K562 (cell line): ENCODE measurements at regions of chr2 and their contacts with region 1.

Region 1: DNA sequence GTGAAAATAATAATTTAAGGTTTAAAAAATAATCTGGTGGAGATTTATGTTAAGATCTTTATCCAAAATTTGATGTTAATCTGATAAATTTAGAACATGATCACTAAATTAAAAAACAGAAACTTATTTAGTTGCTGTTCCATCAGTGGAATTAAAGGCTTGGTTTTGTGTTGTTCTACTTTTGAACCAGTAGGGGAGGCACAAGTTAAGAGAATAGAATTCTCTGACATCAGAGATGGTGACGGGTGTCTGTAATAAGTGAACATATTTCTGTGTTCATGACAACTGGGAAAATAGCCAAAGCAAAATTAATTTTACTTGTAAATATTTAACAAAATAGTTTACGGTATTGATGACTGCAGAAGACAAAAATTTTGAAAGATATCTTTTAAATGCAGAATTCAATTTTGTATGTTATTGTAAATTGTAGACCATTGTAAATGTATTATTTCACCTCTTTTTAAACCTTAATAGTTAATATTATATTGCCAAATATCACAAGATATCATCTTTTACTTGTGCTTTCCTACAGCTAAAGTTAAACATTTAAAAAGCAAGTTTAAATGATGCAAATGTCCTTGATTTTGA is 106.0 kb downstream of the UBR3 start:
- DNase-seq: peak; percentile 52 to 66 (median 65)
- ATAC-seq: peak; percentile 90
- H3K4me3 ChIP-seq: no peak overlapping the region
- H3K27ac ChIP-seq: no peak overlapping the region
- H3K4me1 ChIP-seq: no peaks in the 10 kb centered on the region
- H3K27me3 ChIP-seq: no peaks in the 10 kb centered on the region
- CTCF ChIP-seq: peak; percentile 64 to 95 (median 75); a peak in 5 of 6 replicates
- EP300 ChIP-seq: no peak
- POLR2A ChIP-seq: no peak
- RAD21 ChIP-seq: peak; percentile 94 to 95

Region 2: GRCh38 chr2:169528271-169528701 is 404.9 kb before region 1 on chr2:
- CTCF ChIA-PET with region 1: interaction called, 16 read pairs
- POLR2A ChIA-PET with region 1: no interaction called
- in situ Hi-C with region 1: no loop called
- intact Hi-C with region 1: loop called (anchors 2 kb)
- DNase-seq: peak; percentile 71 to 88 (median 81)
- ATAC-seq: peak; percentile 99
- H3K4me3 ChIP-seq: no peak overlapping the region
- H3K27ac ChIP-seq: no peak overlapping the region
- H3K4me1 ChIP-seq: no peaks in the 10 kb centered on the region
- H3K27me3 ChIP-seq: no peaks in the 10 kb centered on the region
- CTCF ChIP-seq: peak; percentile 88 to 94 (median 91)
- EP300 ChIP-seq: no peak
- POLR2A ChIP-seq: no peak
- RAD21 ChIP-seq: peak; percentile 74 to 92

Region 3: DNA sequence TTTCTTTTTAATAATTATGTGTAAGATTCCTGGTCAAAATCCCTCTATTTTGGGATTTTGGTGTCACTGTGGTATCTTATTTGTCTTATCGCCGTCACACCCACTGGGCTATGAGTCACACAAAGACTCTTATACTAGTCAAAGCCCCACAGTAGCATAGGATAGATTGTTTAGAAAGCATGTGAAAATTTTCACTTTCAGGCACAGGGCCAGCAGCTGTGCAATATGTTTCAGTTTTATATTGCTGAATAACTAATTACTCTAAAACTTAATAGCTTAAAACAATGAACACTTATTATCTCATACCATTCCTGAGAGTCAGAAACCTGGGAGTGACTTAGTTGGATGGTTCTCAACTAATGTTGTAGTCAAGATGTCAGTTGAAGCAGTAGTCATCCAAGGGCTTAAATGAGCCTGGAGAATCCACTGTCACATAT is 263.0 kb before region 1 on chr2:
- CTCF ChIA-PET with region 1: no interaction called
- POLR2A ChIA-PET with region 1: no interaction called
- in situ Hi-C with region 1: no loop called
- intact Hi-C with region 1: loop called (anchors 10 kb)
- DNase-seq: peak; percentile 66 to 84 (median 76)
- ATAC-seq: peak; percentile 86
- H3K4me3 ChIP-seq: no peak overlapping the region
- H3K27ac ChIP-seq: peak overlapping the region; percentile 65
- H3K4me1 ChIP-seq: peaks cover 0 to 49% of the 10 kb centered on the region in 2 experiments; a peak in 3 of 5 replicates
- H3K27me3 ChIP-seq: no peaks in the 10 kb centered on the region
- CTCF ChIP-seq: no peak
- EP300 ChIP-seq: peak; percentile 82; the same call in 1 of the 2 replicates
- POLR2A ChIP-seq: no peak
- RAD21 ChIP-seq: no peak

Region 4: DNA sequence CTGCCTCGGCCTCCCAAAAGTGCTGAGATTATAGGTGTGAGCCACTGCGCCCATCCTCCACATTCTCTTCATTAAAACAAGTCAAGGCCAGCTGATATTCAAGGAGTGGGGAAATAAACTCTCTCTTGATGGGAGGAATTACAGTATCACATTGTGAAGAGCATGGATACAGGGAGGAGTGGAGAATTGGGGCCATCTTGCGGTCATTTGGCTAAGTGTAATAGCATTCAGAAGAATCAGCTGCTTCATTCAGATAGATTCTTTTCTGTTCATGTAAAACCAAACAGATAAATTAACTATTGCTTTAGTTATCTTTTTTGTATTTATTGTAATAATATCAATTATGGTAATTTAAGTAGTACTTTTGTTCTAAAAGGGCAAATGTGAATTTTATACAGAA is 50.3 kb after region 1 on chr2:
- CTCF ChIA-PET with region 1: interaction called, 9 read pairs
- POLR2A ChIA-PET with region 1: no interaction called
- in situ Hi-C with region 1: no loop called
- intact Hi-C with region 1: loop called (anchors 1 kb)
- DNase-seq: peak in 2 of 4 experiments; percentile 26 to 41
- ATAC-seq: peak; percentile 83
- H3K4me3 ChIP-seq: no peak overlapping the region
- H3K27ac ChIP-seq: no peak overlapping the region
- H3K4me1 ChIP-seq: peaks cover 4 to 11% of the 10 kb centered on the region in 2 experiments; a peak in 3 of 5 replicates
- H3K27me3 ChIP-seq: no peaks in the 10 kb centered on the region
- CTCF ChIP-seq: peak; percentile 45 to 61 (median 47); a peak in 4 of 6 replicates
- EP300 ChIP-seq: no peak
- POLR2A ChIP-seq: no peak
- RAD21 ChIP-seq: peak; percentile 49 to 76

Region 5: GRCh38 chr2:170235860-170236679 is 302.9 kb after region 1 on chr2:
- CTCF ChIA-PET with region 1: no interaction called
- POLR2A ChIA-PET with region 1: no interaction called
- in situ Hi-C with region 1: no loop called
- intact Hi-C with region 1: loop called (anchors 2 kb)
- DNase-seq: peak; percentile 83 to 89 (median 84)
- ATAC-seq: peak; percentile 89
- H3K4me3 ChIP-seq: no peak overlapping the region
- H3K27ac ChIP-seq: no peak overlapping the region; the same call in 1 of the 3 replicates
- H3K4me1 ChIP-seq: peaks cover 0 to 57% of the 10 kb centered on the region in 2 experiments; a peak in 3 of 5 replicates
- H3K27me3 ChIP-seq: no peaks in the 10 kb centered on the region
- CTCF ChIP-seq: peak; percentile 69 to 92 (median 86)
- EP300 ChIP-seq: peak; percentile 94
- POLR2A ChIP-seq: no peak
- RAD21 ChIP-seq: peak; percentile 99

Region 6: GRCh38 chr2:170361090-170361936 is 428.1 kb after region 1 on chr2:
- CTCF ChIA-PET with region 1: no interaction called
- POLR2A ChIA-PET with region 1: no interaction called
- in situ Hi-C with region 1: no loop called
- intact Hi-C with region 1: loop called (anchors 5 kb)
- DNase-seq: peak; percentile 57 to 90 (median 64)
- ATAC-seq: peak; percentile 85
- H3K4me3 ChIP-seq: 0 out of 2 replicates have a peak overlapping the region, but pooled peaks have one; percentile 0
- H3K27ac ChIP-seq: peak overlapping the region; percentile 75
- H3K4me1 ChIP-seq: peaks cover 0 to 56% of the 10 kb centered on the region in 2 experiments; a peak in 4 of 5 replicates
- H3K27me3 ChIP-seq: no peaks in the 10 kb centered on the region
- CTCF ChIP-seq: peak; percentile 81 to 95 (median 89)
- EP300 ChIP-seq: no peak
- POLR2A ChIP-seq: no peak
- RAD21 ChIP-seq: peak; percentile 75 to 83